ENCODE measurements at regions of chr7 and their contacts with region 1.

Region 1: DNA sequence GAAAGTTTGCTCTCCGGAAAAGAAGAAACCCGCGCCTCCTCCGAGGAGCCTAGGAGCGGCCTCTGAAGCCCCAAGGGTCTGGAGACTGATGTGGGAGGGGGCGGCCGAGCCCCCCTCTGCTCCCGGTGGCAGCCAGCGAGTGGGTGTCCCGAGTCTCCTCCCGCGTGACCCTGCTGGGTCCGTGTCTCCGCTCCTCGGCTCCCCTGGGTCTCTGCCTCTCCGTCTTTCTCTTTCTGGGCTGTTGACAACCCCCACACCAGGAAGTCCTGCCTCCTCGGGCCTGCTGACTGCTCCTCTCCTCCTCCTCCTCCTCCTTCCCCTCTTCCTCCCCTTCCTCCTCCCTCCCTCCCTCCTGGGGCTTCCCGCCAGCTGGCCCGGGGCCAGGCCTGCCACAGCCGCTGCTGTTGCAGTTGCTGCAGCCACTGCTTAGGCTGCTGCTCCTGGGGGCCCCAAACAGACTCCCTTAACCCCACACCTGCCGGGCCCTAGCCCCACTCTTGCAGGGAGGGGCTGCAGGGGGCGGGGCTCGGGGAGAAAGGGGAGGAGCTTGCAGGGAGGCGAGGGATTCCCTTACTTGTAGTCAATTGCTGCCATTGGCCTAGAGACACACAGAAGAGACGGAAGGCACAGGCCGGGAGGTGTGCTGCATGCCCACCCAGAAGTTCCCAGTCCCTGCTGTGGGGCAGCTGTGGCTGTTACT is at the start of gene TSC22D4:
- DNase-seq: peak; percentile 93
- H3K4me3 Mint-ChIP-seq: peak within 1 kb of the TSS; percentile 98
- H3K27ac Mint-ChIP-seq: peak within 1 kb of the TSS; percentile 92
- H3K4me1 Mint-ChIP-seq: peaks cover 42% of the 10 kb centered on the region
- H3K27me3 Mint-ChIP-seq: no peaks in the 10 kb centered on the region
- total RNA-seq, gene TSC22D4: 46.0 to 48.7 TPM

Region 2: DNA sequence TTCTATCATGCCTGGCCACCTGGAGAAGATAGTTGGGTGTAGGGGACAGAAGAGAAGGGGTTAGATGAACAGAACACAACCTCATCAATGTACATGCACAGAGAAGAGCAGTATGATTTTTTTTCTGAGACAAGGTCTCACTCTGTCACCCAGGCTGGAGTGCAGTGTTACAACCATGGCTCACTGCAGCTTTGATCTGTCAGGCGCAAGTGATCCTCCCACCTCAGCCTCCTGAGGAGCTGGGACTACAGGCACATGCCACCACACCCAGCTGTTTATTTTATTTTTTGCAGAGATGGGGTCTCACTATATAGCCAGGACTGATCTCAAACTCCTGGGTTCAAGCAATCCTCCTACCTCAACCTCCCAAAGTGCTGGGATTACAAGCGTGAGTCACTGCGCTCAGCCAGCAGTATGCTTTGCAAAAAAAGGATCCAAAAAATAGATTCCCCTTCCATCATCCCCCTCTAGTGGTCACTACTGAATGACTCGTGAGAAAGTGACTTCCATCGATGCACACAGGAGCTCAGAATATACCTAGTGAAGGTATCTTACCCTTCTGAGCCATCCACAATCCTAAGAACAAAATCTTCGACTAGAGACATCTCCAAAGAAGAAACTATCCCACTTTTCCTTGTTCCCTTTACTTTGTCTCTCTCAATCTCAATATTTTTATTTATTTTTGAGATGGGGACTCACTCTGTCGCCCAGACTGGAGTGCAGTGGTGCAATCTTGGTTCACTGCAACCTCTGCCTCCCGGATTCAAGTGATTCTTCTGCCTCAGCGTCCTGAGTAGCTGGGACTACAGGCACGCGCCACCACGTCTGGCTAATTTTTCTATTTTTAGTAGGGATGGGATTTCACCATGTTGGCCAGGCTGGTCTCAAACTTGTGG is 71.6 kb before region 1 on chr7:
- CTCF ChIA-PET with region 1: no interaction called
- intact Hi-C with region 1: no loop called
- DNase-seq: peak; percentile 61
- H3K4me3 Mint-ChIP-seq: no peak overlapping the region
- H3K27ac Mint-ChIP-seq: no peak overlapping the region
- H3K4me1 Mint-ChIP-seq: peaks cover 2% of the 10 kb centered on the region
- H3K27me3 Mint-ChIP-seq: no peaks in the 10 kb centered on the region

Region 3: DNA sequence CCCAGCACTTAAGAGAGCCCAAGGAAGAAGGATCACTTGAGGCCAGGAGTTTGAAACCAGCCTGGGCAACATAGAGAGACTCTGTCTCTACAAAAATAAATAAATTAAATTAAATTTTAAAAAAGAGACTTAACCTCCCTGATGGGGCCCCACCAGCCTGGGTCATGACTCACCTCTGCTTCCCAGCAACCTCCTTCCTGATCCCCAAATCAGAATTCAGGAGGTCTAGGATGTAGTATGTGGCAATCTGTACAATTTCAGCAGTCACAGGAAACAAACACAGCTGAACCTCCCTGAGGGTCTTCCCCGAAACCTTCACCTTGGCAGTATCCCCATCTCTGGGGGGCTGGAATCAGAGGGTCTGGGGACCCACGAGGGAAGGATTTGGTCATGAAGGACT is 33.1 kb before region 1 on chr7:
- CTCF ChIA-PET with region 1: interaction called, 3 read pairs
- intact Hi-C with region 1: loop called (anchors 1 kb)
- DNase-seq: no peak
- H3K4me3 Mint-ChIP-seq: no peak overlapping the region
- H3K27ac Mint-ChIP-seq: no peak overlapping the region
- H3K4me1 Mint-ChIP-seq: peaks cover 20% of the 10 kb centered on the region
- H3K27me3 Mint-ChIP-seq: no peaks in the 10 kb centered on the region

Region 4: GRCh38 chr7:100556541-100556940 is 77.4 kb after region 1 on chr7:
- CTCF ChIA-PET with region 1: interaction called, 23 read pairs
- intact Hi-C with region 1: loop called (anchors 1 kb)
- DNase-seq: no peak
- H3K4me3 Mint-ChIP-seq: no peak overlapping the region
- H3K27ac Mint-ChIP-seq: no peak overlapping the region
- H3K4me1 Mint-ChIP-seq: peaks cover 9% of the 10 kb centered on the region
- H3K27me3 Mint-ChIP-seq: no peaks in the 10 kb centered on the region

Region 5: DNA sequence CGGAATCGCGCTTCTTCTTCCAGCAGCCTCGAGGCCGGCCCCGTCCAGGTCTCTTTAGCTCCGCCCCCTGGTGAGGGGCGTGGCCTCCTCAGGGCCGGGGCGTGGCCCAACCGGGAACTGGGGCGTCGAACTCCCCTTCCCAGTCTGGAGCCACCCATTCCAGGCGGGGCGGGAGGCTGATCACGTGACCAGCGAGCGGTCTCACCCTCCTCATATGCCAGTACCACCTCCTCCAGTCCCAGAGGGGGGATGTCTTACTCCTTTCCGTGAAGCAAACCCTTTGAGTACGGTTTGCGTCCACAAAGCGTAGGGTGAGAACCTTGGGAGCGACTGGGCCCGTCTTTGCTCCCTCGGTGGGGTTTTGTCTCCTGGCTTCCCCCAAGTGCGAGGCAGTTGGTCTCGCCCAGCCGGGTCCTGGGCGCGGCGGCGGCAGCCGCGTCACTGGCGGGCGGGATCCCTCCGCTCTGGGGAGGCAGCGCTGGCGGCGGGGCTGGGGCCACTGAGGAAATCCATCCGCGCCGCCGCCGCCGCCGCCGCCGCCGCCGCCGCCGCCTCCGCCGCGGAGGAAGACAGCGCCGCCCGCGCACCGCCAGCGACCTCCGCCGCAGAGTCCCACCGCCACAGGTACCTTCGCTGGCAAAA is 194.3 kb after region 1 on chr7 and contains the start of gene GNB2:
- CTCF ChIA-PET with region 1: no interaction called
- intact Hi-C with region 1: loop called (anchors 5 kb)
- DNase-seq: peak; percentile 100
- H3K4me3 Mint-ChIP-seq: peak within 1 kb of the TSS; percentile 97
- H3K27ac Mint-ChIP-seq: peak within 1 kb of the TSS; percentile 95
- H3K4me1 Mint-ChIP-seq: peaks cover 17% of the 10 kb centered on the region
- H3K27me3 Mint-ChIP-seq: no peaks in the 10 kb centered on the region
- total RNA-seq, gene GNB2: 221 TPM

Region 6: DNA sequence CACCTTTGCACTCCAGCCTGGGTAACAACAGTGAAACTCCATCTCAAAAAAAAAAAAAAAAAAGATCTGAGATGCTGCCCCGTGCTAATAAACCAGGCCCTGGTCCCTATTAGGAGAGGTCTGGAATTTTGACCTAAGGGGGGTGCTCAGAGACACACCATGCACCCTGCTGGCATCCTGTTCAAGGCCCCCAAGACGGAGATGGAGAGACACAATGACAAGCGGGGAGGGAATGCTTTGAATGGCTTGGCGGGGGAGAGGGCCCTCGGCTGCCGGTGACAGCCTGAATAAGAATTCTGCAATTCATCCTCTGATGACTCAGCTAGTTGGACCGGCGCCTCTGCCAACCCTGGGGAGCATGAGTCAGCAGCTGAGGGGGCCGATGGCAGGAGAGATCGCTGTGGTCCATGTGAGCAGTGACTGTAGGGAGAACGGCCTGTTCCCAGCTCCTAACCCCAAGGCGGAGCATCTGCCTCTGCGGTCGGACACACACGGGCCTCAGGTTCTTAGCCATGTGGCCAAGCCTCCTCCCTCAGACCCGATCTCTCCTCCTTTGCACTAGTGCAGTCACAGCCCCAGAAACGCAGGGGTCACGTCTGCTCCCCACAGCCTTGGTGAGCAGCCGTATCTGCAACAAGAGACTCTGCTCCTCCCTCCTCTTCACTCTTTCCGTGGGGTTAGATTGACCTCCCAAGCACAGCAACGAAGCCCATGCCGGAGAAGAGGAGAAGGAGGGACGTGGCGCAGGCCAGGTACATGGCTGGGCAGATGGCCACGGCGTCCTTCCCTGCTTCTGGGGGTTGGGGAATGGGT is 621.1 kb after region 1 on chr7:
- CTCF ChIA-PET with region 1: no interaction called
- intact Hi-C with region 1: no loop called
- DNase-seq: peak; percentile 76
- H3K4me3 Mint-ChIP-seq: peak overlapping the region; percentile 2
- H3K27ac Mint-ChIP-seq: no peak overlapping the region
- H3K4me1 Mint-ChIP-seq: peaks cover 13% of the 10 kb centered on the region
- H3K27me3 Mint-ChIP-seq: peaks cover 14% of the 10 kb centered on the region

Measured in activated naive CD4-positive, alpha-beta T cell treated with anti-CD3 and anti-CD28 coated beads for 36 hours (primary cell).